ENCODE measurements at regions of chr2 and their contacts with region 1.

Region 1: DNA sequence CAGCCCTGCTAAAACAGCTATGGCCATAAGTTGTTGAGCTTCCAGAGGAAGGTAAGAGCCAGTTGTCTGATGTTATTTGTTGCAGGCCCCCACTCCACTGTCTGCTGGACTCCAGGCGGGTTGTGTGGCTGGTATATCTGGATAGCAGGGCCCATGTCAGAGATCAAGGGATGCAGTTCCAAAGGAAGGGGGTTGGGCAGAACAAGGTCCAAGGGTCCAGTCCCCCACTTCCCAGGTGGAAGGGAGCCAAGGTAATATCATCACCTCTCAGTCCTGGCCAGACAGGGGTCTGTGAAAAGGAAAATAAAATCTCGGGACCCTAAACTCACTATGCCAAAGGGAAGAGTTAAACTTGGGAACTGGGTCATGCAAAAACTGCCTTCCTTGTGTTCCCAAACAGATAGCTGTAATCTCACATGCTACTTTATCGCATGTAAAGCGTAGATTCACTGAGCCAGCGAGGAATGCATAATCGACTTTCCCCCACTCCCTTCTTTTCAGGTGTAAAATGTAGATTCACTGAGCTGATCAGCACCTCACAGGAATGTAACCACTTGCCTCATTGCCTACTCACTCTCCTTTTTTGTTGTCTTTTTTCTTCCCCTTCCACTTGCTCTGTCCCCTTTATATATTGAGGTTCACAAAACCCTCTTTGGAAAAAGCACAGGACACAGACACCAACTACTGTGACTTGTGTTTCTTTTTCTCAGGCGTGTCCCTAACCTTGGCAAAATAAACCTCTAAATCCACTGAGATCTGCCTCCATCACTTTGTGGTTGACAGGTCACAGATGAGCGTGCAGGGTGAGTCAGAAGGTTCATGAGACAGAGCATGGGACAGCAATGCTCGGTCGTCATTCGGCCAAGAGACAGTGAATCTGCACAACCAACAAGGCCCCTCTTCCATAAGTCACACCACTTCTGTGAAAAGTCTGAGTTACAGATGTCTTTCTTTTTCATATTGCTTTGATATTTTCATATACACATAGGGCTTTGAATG is 255.3 kb upstream of the SIX2 start:
- DNase-seq: no peak
- H3K4me3 ChIP-seq: no peak overlapping the region
- H3K27ac ChIP-seq: no peak overlapping the region
- H3K4me1 ChIP-seq: peaks cover 55% of the 10 kb centered on the region
- H3K27me3 ChIP-seq: no peaks in the 10 kb centered on the region
- CTCF ChIP-seq: no peak
- POLR2A ChIP-seq: no peak

Region 2: DNA sequence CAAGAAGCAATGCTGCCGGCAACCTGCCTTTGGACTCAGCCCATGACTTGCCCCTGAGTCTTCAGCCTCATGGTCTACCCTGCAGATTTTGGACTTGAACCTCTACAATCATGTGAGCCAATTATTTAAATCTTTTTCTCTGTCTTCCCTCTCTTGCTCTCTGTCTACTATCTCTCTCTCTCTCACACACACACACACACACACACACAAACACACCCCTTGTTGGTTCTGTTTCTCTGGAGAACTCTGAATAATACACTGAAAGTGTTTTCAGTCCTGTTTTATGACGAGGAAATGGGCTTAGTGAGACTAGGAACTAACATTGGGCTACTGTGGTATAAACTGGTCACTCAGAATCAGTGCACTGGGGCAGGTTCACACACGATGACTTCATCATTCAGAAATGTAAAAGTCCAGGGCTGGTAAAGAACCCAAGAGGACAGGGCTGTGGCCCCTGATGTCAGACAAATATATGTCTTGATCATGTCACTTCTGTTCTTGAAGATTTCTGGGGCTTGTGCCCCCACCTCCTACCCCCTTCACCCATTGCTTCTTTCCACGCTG is 10.8 kb after region 1 on chr2:
- CTCF ChIA-PET with region 1: interaction called, 23 read pairs
- POLR2A ChIA-PET with region 1: no interaction called
- dilution Hi-C with region 1: no loop called
- intact Hi-C with region 1: no loop called
- DNase-seq: peak; percentile 70
- H3K4me3 ChIP-seq: no peak overlapping the region
- H3K27ac ChIP-seq: peak overlapping the region; percentile 34
- H3K4me1 ChIP-seq: peaks cover 38% of the 10 kb centered on the region
- H3K27me3 ChIP-seq: no peaks in the 10 kb centered on the region
- CTCF ChIP-seq: no peak
- POLR2A ChIP-seq: no peak

Region 3: DNA sequence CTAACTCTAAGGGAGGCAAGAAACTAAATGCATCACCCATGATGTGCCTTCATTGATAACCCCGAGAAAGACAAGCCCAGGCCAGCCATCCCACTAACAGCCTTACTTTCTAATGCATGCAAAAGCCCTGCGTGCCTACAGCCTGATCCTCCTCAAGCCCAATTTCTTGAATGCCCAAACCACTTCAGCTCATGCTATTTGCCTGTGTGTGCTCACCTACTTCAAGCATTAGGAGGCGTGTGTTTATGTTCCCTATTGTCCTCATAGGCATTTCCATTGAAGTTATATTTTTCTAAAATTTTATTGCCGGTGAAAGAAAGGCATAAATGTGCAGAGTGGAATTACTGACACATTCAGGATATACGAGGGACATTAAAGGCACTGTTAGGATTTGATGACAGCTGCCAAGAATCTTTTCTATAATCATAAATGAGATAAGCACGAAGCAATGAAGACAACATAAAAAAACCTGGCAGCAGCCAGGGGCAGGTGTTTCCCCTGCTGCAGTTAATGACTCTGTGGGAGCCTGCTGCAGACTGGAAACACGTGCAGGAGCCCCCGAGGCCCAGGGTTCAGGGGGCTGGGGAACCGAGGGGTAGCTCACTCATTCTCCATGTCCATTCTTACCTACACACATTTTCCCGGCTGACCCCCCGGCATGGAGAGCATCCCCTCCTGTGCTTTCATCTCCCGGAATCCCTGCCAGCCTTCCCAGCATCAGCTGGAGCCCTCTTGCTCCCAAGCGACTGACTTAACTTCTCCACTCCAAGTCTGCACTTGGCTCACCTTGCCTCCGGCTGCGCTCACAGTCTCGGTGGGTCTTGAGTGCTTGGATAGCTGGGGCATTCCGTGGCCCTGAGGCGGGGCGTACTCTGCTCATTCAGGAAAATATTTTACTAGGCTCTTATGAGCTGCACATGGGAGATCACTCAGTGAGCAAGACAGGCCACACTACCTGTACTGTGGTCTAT is 37.1 kb after region 1 on chr2:
- CTCF ChIA-PET with region 1: interaction called, 5 read pairs
- POLR2A ChIA-PET with region 1: no interaction called
- dilution Hi-C with region 1: no loop called
- intact Hi-C with region 1: loop called (anchors 1 kb)
- DNase-seq: peak; percentile 95
- H3K4me3 ChIP-seq: no peak overlapping the region
- H3K27ac ChIP-seq: no peak overlapping the region
- H3K4me1 ChIP-seq: peaks cover 12% of the 10 kb centered on the region
- H3K27me3 ChIP-seq: no peaks in the 10 kb centered on the region
- CTCF ChIP-seq: no peak
- POLR2A ChIP-seq: peak; percentile 28

Region 4: DNA sequence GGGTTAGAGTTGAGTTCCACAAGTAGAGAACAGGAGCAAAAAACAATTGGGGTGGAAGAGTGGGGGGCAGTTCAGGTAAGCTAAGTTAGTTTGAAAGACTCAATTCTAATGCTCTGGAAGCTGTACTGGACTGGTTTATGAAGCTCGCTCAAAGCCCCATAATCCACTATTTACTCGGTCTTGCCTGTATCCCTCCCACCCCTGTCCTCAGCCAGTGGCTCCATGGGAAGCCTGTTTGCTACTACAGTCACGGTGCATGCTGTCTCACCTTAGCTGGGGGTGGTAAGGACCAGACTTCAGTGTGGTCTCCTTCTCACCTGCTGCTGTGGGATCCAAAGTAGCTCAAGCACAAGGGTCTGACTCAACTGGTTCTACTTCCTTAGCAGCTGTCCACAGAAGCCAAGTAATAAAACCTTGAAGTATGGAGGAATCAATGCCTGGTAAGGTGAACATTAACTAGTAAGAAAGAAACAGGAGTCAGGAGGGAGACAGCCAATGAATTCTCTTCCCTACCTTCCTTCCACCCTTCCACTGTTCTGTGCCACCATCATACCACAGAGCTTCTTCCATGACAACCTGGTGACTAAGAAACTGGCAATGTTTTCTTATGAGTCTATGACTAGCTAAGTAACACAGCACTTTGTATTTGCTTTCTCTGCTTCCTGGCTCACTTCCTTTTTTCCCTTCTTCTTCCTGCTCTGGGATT is 115.8 kb after region 1 on chr2:
- CTCF ChIA-PET with region 1: no interaction called
- POLR2A ChIA-PET with region 1: no interaction called
- dilution Hi-C with region 1: no loop called
- intact Hi-C with region 1: loop called (anchors 5 kb)
- DNase-seq: peak; percentile 57
- H3K4me3 ChIP-seq: no peak overlapping the region
- H3K27ac ChIP-seq: peak overlapping the region; percentile 72
- H3K4me1 ChIP-seq: peaks cover 31% of the 10 kb centered on the region
- H3K27me3 ChIP-seq: no peaks in the 10 kb centered on the region
- CTCF ChIP-seq: no peak
- POLR2A ChIP-seq: no peak